Mammary epithelial cell (primary cell): ENCODE measurements at regions of chr1 and their contacts with region 1.

Region 1: GRCh38 chr1:212234431-212235395 is 50.5 kb upstream of the PPP2R5A start:
- DNase-seq: peak; percentile 95
- H3K4me3 ChIP-seq: no peak overlapping the region
- H3K27ac ChIP-seq: peak overlapping the region; percentile 39
- H3K4me1 ChIP-seq: peaks cover 22% of the 10 kb centered on the region
- H3K27me3 ChIP-seq: no peaks in the 10 kb centered on the region
- CTCF ChIP-seq: no peak

Region 2: GRCh38 chr1:212284744-212285684 is 50.3 kb after region 1 on chr1 and contains the start of gene PPP2R5A:
- CTCF ChIA-PET with region 1: no interaction called
- dilution Hi-C with region 1: no loop called
- in situ Hi-C with region 1: no loop called
- intact Hi-C with region 1: loop called (anchors 2 kb)
- DNase-seq: peak; percentile 99
- H3K4me3 ChIP-seq: peak within 1 kb of the TSS; percentile 63 to 95 (median 92)
- H3K27ac ChIP-seq: peak within 1 kb of the TSS; percentile 92
- H3K4me1 ChIP-seq: peaks cover 22% of the 10 kb centered on the region
- H3K27me3 ChIP-seq: no peaks in the 10 kb centered on the region
- CTCF ChIP-seq: peak in 1 of 2 donors; percentile 28
- total RNA-seq, gene PPP2R5A: 17.3 to 19.0 TPM

Region 3: DNA sequence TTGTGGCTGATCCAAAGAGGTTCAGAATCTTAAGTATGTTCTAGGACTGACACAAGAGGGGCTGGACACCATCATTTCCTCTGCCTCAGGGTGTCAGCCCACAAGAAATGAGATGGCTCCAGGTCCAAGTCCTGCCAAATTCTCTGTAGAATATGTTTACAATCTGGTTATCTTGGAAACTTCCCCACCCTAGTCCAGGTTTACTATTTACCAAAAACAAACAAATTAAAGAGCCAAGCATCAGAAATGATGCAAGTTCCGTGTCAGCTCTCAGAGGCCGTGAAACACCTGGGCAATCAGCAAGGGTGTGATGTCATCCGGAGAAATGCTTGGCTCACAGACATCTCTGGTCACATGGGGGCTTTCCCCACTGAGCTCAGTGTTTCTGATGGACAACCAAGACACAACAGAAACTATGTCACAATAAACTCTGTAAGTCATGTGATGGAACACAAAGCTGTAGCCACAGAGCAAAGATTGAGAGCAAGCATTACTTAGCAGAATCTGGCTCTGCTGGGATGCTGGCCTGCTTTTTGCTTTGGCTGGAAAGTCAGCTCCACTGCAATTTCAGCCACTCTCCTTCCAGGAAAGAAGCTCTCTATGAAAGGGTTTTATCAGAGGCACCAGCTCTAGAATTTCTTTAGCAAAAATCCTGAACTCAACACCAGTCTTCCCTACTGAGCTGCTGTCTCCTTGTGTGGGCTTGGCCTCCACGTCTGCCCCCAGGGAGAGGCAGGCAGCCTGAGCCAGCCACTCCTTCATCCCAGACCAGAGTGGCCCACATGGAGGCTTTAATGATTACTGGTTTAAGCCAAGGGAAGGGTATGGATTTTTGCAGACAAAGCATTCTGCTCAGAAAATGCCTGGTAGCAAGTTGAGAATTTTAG is 253.9 kb after region 1 on chr1:
- CTCF ChIA-PET with region 1: no interaction called
- dilution Hi-C with region 1: no loop called
- in situ Hi-C with region 1: no loop called
- intact Hi-C with region 1: no loop called
- DNase-seq: peak; percentile 96
- H3K4me3 ChIP-seq: no peak overlapping the region
- H3K27ac ChIP-seq: peak overlapping the region; percentile 33
- H3K4me1 ChIP-seq: peaks cover 24% of the 10 kb centered on the region
- H3K27me3 ChIP-seq: no peaks in the 10 kb centered on the region
- CTCF ChIP-seq: no peak